IMR-90 (cell line): ENCODE measurements at regions of chr3 and their contacts with region 1.

Region 1: GRCh38 chr3:134212906-134213665 is 37.6 kb downstream of the RYK start:
- DNase-seq: peak; percentile 74
- ATAC-seq: peak; percentile 92
- H3K4me3 ChIP-seq: no peak overlapping the region
- H3K27ac ChIP-seq: no peak overlapping the region
- H3K4me1 ChIP-seq: peaks cover 3% of the 10 kb centered on the region
- H3K27me3 ChIP-seq: no peaks in the 10 kb centered on the region
- CTCF ChIP-seq: peak; percentile 92
- POLR2A ChIP-seq: no peak
- RAD21 ChIP-seq: peak; percentile 89

Region 2: GRCh38 chr3:133927540-133928066 is 285.5 kb before region 1 on chr3:
- CTCF ChIA-PET with region 1: interaction called, 6 read pairs
- POLR2A ChIA-PET with region 1: no interaction called
- dilution Hi-C with region 1: no loop called
- in situ Hi-C with region 1: loop called (anchors 5 kb)
- intact Hi-C with region 1: loop called (anchors 1 kb)
- DNase-seq: no peak
- ATAC-seq: peak; percentile 87
- H3K4me3 ChIP-seq: peak overlapping the region; percentile 51
- H3K27ac ChIP-seq: no peak overlapping the region; the same call in 1 of the 2 replicates
- H3K4me1 ChIP-seq: peaks cover under 1% of the 10 kb centered on the region
- H3K27me3 ChIP-seq: no peaks in the 10 kb centered on the region; the same call in 1 of the 2 replicates
- CTCF ChIP-seq: peak; percentile 71
- POLR2A ChIP-seq: no peak
- RAD21 ChIP-seq: peak; percentile 44

Region 3: DNA sequence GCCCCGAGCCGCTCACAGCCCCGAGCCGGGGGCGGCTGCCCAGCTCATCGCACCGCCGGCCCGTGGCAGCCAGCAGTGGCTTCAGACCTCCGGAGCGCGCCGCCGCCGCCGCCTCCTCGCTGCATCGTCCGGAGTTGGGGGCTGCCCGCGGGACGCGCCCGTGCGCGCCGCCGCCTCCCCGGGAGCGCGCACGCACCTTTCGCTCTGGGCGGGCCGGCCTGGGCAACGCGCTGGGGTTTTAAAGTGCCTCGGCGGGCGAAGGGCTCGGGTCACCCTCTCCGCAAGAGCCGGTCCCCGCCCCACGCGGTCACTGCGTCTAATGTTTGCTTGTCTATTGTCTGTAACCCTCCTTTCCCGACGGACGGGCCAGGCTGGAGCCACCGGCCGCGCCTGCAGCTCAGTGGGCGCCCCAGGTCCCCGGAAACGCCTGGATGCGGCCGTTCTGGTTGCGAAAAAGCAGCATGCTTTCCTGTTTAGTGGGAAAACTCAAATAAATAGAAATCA is 37.7 kb after region 1 on chr3 and contains the start of gene RYK:
- CTCF ChIA-PET with region 1: interaction called, 5 read pairs
- POLR2A ChIA-PET with region 1: no interaction called
- dilution Hi-C with region 1: no loop called
- in situ Hi-C with region 1: no loop called
- intact Hi-C with region 1: loop called (anchors 5 kb)
- DNase-seq: peak; percentile 64
- ATAC-seq: peak; percentile 87
- H3K4me3 ChIP-seq: peak within 1 kb of the TSS; percentile 71
- H3K27ac ChIP-seq: peak within 1 kb of the TSS; percentile 87
- H3K4me1 ChIP-seq: peaks cover 7% of the 10 kb centered on the region
- H3K27me3 ChIP-seq: no peaks in the 10 kb centered on the region
- CTCF ChIP-seq: no peak
- POLR2A ChIP-seq: no peak
- RAD21 ChIP-seq: no peak
- total RNA-seq, gene RYK: 106 TPM in 2 replicates

Region 4: GRCh38 chr3:134308350-134308891 is 95.3 kb after region 1 on chr3:
- CTCF ChIA-PET with region 1: interaction called, 4 read pairs
- POLR2A ChIA-PET with region 1: no interaction called
- dilution Hi-C with region 1: no loop called
- in situ Hi-C with region 1: loop called (anchors 5 kb)
- intact Hi-C with region 1: no loop called
- DNase-seq: peak; percentile 76
- ATAC-seq: peak; percentile 77
- H3K4me3 ChIP-seq: peak overlapping the region; percentile 5; the same call in 1 of the 2 replicates
- H3K27ac ChIP-seq: peak overlapping the region; percentile 82
- H3K4me1 ChIP-seq: peaks cover 26% of the 10 kb centered on the region
- H3K27me3 ChIP-seq: no peaks in the 10 kb centered on the region
- CTCF ChIP-seq: peak; percentile 99
- POLR2A ChIP-seq: peak; percentile 65
- RAD21 ChIP-seq: peak; percentile 99

Region 5: GRCh38 chr3:134473868-134474546 is 260.9 kb after region 1 on chr3:
- CTCF ChIA-PET with region 1: interaction called, 5 read pairs
- POLR2A ChIA-PET with region 1: interaction called, 5 read pairs
- dilution Hi-C with region 1: no loop called
- in situ Hi-C with region 1: no loop called
- intact Hi-C with region 1: loop called (anchors 2 kb)
- DNase-seq: peak; percentile 87
- ATAC-seq: peak; percentile 64
- H3K4me3 ChIP-seq: no peak overlapping the region
- H3K27ac ChIP-seq: peak overlapping the region; percentile 79
- H3K4me1 ChIP-seq: peaks cover 24% of the 10 kb centered on the region
- H3K27me3 ChIP-seq: no peaks in the 10 kb centered on the region
- CTCF ChIP-seq: peak; percentile 87
- POLR2A ChIP-seq: peak; percentile 52
- RAD21 ChIP-seq: peak; percentile 91